ENCODE measurements at regions of chr12 and their contacts with region 1.

Region 1: GRCh38 chr12:7989827-7990551 is 42.5 kb upstream of the FOXJ2 start:
- DNase-seq: peak; percentile 94
- ATAC-seq: peak; percentile 92
- H3K4me3 Mint-ChIP-seq: peak overlapping the region; percentile 62
- H3K27ac Mint-ChIP-seq: peak overlapping the region; percentile 90
- H3K4me1 Mint-ChIP-seq: peaks cover 42% of the 10 kb centered on the region
- H3K27me3 Mint-ChIP-seq: no peaks in the 10 kb centered on the region

Region 2: DNA sequence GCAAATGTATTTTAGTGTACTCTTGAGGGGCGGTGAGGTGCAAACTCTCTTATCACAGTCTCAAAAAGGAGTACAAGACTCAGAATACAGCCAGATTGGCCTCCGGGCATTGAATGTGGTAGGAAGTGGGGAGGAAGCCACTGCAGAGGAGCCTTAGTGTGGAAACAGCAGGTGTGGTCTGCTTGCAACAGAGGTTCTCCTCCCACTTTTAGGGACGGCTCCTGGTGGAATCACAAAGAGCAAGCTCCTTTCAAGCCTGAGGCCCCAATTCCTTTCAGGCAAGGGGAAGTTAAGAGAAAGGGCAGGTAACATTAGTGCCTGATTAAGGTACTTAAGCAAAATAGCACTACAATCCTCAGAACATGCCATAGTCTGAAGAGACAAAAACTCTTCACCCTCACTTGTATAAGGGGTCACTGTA is 30.3 kb before region 1 on chr12:
- CTCF ChIA-PET with region 1: interaction called, 16 read pairs
- POLR2A ChIA-PET with region 1: interaction called, 7 read pairs
- intact Hi-C with region 1: loop called (anchors 1 kb)
- DNase-seq: peak; percentile 60
- ATAC-seq: peak; percentile 34
- H3K4me3 Mint-ChIP-seq: peak overlapping the region; percentile 86
- H3K27ac Mint-ChIP-seq: peak overlapping the region; percentile 94
- H3K4me1 Mint-ChIP-seq: peaks cover 30% of the 10 kb centered on the region
- H3K27me3 Mint-ChIP-seq: no peaks in the 10 kb centered on the region

Measured in activated CD4-positive, alpha-beta T cell treated with anti-CD3 and anti-CD28 coated beads for 36 hours (primary cell).